ENCODE measurements at regions of chr18 and their contacts with region 1.

Region 1: GRCh38 chr18:45664824-45665763 is 49.8 kb downstream of the SLC14A2 start:
- DNase-seq: peak; percentile 81
- ATAC-seq: peak; percentile 38
- H3K4me3 Mint-ChIP-seq: peak overlapping the region; percentile 34
- H3K27ac Mint-ChIP-seq: peak overlapping the region; percentile 85
- H3K4me1 Mint-ChIP-seq: peaks cover 53% of the 10 kb centered on the region
- H3K27me3 Mint-ChIP-seq: no peaks in the 10 kb centered on the region

Region 2: DNA sequence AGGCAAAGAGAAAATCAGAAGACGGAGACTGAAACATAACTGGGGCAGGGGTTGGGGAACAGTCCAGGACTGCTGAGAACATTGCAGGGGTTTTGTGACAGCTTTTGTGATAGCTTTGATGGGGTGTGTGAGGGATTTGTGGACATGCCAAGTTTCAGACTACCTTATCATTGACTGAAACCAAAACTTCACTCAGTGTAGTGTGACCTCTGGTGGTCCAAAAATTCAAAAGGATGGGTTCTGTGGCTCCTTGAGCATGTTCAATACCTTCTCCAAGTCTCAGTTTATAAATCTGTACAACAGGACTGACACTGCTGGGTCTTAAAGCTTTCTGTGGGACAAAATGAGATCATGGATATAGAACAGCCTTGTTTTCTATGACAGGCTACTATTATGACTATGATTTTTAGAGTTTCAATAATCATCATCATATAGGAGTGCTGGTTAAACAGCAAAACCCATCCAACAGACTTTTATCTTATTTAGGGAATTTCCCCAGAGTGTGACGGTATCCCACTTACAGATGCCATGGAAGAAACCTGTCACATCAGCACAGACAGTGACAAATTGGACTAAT is 309.1 kb before region 1 on chr18:
- CTCF ChIA-PET with region 1: no interaction called
- POLR2A ChIA-PET with region 1: no interaction called
- DNase-seq: no peak
- ATAC-seq: no peak
- H3K4me3 Mint-ChIP-seq: no peak overlapping the region
- H3K27ac Mint-ChIP-seq: no peak overlapping the region
- H3K4me1 Mint-ChIP-seq: no peaks in the 10 kb centered on the region
- H3K27me3 Mint-ChIP-seq: no peaks in the 10 kb centered on the region

Region 3: GRCh38 chr18:45621061-45621511 is 44.0 kb before region 1 on chr18:
- CTCF ChIA-PET with region 1: interaction called, 12 read pairs
- POLR2A ChIA-PET with region 1: no interaction called
- DNase-seq: peak; percentile 57
- ATAC-seq: peak; percentile 55
- H3K4me3 Mint-ChIP-seq: no peak overlapping the region
- H3K27ac Mint-ChIP-seq: no peak overlapping the region
- H3K4me1 Mint-ChIP-seq: no peaks in the 10 kb centered on the region
- H3K27me3 Mint-ChIP-seq: peaks cover 16% of the 10 kb centered on the region

Region 4: GRCh38 chr18:45690975-45691815 is 26.1 kb after region 1 on chr18:
- CTCF ChIA-PET with region 1: interaction called, 315 read pairs
- POLR2A ChIA-PET with region 1: interaction called, 96 read pairs
- DNase-seq: peak; percentile 85
- ATAC-seq: no peak
- H3K4me3 Mint-ChIP-seq: no peak overlapping the region
- H3K27ac Mint-ChIP-seq: no peak overlapping the region
- H3K4me1 Mint-ChIP-seq: peaks cover 49% of the 10 kb centered on the region
- H3K27me3 Mint-ChIP-seq: peaks cover 13% of the 10 kb centered on the region

Region 5: DNA sequence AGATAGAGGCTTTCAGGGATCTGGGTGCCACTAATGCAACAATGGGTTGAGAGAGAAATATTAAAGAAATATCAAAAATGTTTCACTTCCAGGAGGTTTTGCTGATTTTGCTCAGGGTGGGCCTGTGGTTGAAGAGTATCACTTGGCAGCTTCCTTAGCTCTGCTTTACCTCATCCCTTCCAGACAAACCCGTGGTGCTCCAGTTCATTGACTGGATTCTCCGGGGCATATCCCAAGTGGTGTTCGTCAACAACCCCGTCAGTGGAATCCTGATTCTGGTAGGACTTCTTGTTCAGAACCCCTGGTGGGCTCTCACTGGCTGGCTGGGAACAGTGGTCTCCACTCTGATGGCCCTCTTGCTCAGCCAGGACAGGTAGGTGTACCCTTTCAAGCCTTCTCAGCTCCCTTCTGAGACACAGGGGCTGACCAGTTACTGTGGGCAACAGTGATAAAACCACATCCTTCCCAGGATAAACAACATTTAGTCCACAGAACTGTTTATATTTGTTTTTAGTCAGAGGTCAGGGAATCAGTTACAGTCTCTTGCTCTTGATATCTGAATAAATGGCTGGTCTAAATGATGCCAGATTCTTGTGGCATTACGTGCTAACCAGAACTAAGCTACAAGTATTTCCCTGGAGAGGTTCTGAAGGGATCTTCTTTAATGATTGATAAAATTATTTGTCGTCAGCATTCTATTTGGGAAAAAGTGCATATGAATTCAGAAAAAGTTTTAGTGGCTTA is 65.9 kb after region 1 on chr18:
- CTCF ChIA-PET with region 1: interaction called, 19 read pairs
- POLR2A ChIA-PET with region 1: no interaction called
- DNase-seq: no peak
- ATAC-seq: no peak
- H3K4me3 Mint-ChIP-seq: no peak overlapping the region
- H3K27ac Mint-ChIP-seq: no peak overlapping the region
- H3K4me1 Mint-ChIP-seq: no peaks in the 10 kb centered on the region
- H3K27me3 Mint-ChIP-seq: no peaks in the 10 kb centered on the region

Region 6: GRCh38 chr18:45839414-45840395 is 174.6 kb after region 1 on chr18:
- CTCF ChIA-PET with region 1: interaction called, 32 read pairs
- POLR2A ChIA-PET with region 1: interaction called, 3 read pairs
- DNase-seq: peak; percentile 58
- ATAC-seq: peak; percentile 43
- H3K4me3 Mint-ChIP-seq: no peak overlapping the region
- H3K27ac Mint-ChIP-seq: no peak overlapping the region
- H3K4me1 Mint-ChIP-seq: peaks cover 10% of the 10 kb centered on the region
- H3K27me3 Mint-ChIP-seq: peaks cover 41% of the 10 kb centered on the region

Region 7: GRCh38 chr18:45910405-45911023 is 245.4 kb after region 1 on chr18:
- CTCF ChIA-PET with region 1: interaction called, 63 read pairs
- POLR2A ChIA-PET with region 1: no interaction called
- DNase-seq: peak; percentile 76
- ATAC-seq: peak; percentile 87
- H3K4me3 Mint-ChIP-seq: no peak overlapping the region
- H3K27ac Mint-ChIP-seq: no peak overlapping the region
- H3K4me1 Mint-ChIP-seq: no peaks in the 10 kb centered on the region
- H3K27me3 Mint-ChIP-seq: no peaks in the 10 kb centered on the region